ENCODE measurements at regions of chr7 and their contacts with region 1.

Region 1: GRCh38 chr7:101201695-101202604 is 1.1 kb upstream of the MOGAT3 start:
- DNase-seq: peak; percentile 48
- ATAC-seq: peak; percentile 77
- H3K4me3 ChIP-seq: peak overlapping the region; percentile 74 to 87 (median 84)
- H3K27ac ChIP-seq: peak overlapping the region; percentile 99
- H3K4me1 ChIP-seq: peaks cover 43% of the 10 kb centered on the region
- H3K27me3 ChIP-seq: no peaks in the 10 kb centered on the region; a peak in 1 of 5 replicates
- CTCF ChIP-seq: no peak; the same call in 1 of the 2 replicates
- EP300 ChIP-seq: 0 out of 4 replicates have a peak, but pooled peaks of 1 of the 2 experiments have one; percentile 7
- POLR2A ChIP-seq: peak; percentile 66 to 71; a peak in 3 of 4 replicates
- RAD21 ChIP-seq: 0 out of 2 replicates have a peak, but pooled peaks have one; percentile 31

Region 2: DNA sequence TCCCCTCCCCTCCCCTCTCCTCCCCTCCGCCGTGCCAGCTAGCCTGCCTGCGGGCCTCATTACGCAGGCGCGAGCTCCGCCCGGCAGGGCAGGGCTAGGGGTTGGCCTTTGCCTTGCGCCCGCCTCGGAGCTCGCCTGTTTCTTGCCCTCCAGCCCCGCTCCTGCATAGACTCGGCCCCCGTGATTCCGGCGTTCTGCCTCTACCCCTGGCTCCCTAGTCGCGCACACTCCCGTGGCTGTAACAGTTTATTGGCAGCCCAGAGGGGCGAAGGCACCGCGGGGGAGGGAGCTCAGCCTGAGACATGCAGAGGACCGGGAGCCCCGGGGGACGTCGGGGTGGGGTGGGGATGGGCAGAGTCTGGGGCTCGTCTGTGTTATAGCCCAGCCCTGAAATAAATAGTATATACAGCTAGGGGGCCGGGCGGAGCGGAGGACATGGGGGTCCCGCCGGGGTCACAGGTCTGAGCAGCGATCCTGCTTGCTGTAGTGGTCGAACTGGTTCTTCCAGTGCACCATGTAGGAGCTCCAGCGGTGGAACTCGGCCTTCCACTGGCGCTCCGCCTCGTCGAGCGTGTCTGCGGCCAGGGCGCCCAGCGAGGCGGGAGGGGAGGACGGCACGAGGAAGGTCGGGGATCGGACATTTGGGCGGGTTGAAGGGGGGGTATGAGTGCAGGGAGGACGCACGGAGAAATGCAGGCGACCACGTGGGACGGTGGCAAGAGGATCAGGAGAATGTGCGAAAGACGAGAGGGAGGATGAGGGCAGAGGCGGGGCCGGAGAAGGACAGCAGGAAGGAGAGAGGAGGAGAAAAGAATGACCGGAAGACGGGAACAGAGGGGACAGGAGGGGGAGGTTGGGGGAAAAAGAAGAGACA is 312.0 kb before region 1 on chr7:
- CTCF ChIA-PET with region 1: no interaction called
- POLR2A ChIA-PET with region 1: no interaction called
- in situ Hi-C with region 1: no loop called
- intact Hi-C with region 1: no loop called
- DNase-seq: peak; percentile 84
- ATAC-seq: peak; percentile 87
- H3K4me3 ChIP-seq: peak overlapping the region; percentile 63 to 75 (median 75)
- H3K27ac ChIP-seq: peak overlapping the region; percentile 52
- H3K4me1 ChIP-seq: peaks cover 61% of the 10 kb centered on the region
- H3K27me3 ChIP-seq: peaks cover 6 to 16% of the 10 kb centered on the region in 2 experiments; a peak in 4 of 5 replicates
- CTCF ChIP-seq: no peak
- EP300 ChIP-seq: no peak
- POLR2A ChIP-seq: no peak
- RAD21 ChIP-seq: no peak

Region 3: DNA sequence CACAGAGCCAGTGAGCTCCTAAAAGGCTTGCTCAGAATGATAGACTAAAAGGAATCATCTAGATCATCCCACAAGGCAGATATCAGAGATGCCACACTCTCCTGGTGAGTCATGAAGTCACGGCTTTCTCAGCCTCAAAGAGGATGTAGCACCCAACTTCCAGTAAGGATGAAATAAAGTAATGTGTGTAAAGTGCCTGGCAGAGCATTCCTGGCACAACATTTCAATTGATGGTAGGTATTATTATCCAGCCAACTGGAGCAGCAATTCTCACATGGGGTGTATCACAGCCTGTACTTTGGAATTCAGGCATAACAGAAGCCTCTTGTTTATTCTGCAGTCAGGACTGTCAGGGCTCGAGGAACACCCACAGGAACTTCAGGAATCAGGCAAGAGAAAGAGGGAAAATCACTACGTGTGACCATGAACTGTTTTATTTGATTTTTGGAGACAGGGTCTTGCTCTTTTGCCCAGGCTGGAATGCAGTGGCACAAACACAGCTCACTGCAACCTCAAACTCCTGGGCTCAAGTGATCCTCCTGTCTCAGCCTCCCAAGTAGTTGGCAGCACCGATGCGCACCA is 16.6 kb before region 1 on chr7:
- CTCF ChIA-PET with region 1: no interaction called
- POLR2A ChIA-PET with region 1: interaction called, 22 read pairs
- in situ Hi-C with region 1: no loop called
- intact Hi-C with region 1: no loop called
- DNase-seq: peak; percentile 57
- ATAC-seq: peak; percentile 47
- H3K4me3 ChIP-seq: no peak overlapping the region
- H3K27ac ChIP-seq: no peak overlapping the region
- H3K4me1 ChIP-seq: peaks cover 42% of the 10 kb centered on the region
- H3K27me3 ChIP-seq: peaks cover 3 to 9% of the 10 kb centered on the region in 2 experiments; a peak in 4 of 5 replicates
- CTCF ChIP-seq: no peak
- EP300 ChIP-seq: no peak
- POLR2A ChIP-seq: no peak
- RAD21 ChIP-seq: no peak

Region 4: DNA sequence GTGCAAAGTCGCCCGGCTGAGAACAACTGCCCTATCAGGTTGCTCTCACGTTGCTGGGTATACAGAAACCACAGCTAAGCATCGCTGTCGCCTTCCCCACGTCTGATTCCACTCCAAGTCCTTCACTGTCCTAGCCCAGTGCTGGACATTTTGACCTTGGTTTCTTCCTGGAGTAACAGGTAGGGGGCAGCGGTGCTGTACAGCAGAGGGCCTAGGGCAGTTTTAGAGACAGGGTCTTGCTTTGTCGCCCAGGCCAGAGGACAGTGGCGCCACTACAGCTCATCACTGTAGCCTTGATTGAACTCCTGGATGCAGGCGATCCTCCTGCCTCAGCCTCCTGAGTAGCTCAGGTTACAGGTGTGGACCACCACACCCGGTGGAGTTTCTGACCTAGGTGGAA is 33.1 kb after region 1 on chr7:
- CTCF ChIA-PET with region 1: no interaction called
- POLR2A ChIA-PET with region 1: interaction called, 15 read pairs
- in situ Hi-C with region 1: no loop called
- intact Hi-C with region 1: no loop called
- DNase-seq: peak; percentile 29
- ATAC-seq: peak; percentile 12
- H3K4me3 ChIP-seq: no peak overlapping the region
- H3K27ac ChIP-seq: no peak overlapping the region
- H3K4me1 ChIP-seq: peaks cover 65% of the 10 kb centered on the region
- H3K27me3 ChIP-seq: no peaks in the 10 kb centered on the region
- CTCF ChIP-seq: peak; percentile 62
- EP300 ChIP-seq: no peak
- POLR2A ChIP-seq: 0 out of 4 replicates have a peak, but pooled peaks of 1 of the 2 experiments have one; percentile 42
- RAD21 ChIP-seq: peak; percentile 62

Region 5: DNA sequence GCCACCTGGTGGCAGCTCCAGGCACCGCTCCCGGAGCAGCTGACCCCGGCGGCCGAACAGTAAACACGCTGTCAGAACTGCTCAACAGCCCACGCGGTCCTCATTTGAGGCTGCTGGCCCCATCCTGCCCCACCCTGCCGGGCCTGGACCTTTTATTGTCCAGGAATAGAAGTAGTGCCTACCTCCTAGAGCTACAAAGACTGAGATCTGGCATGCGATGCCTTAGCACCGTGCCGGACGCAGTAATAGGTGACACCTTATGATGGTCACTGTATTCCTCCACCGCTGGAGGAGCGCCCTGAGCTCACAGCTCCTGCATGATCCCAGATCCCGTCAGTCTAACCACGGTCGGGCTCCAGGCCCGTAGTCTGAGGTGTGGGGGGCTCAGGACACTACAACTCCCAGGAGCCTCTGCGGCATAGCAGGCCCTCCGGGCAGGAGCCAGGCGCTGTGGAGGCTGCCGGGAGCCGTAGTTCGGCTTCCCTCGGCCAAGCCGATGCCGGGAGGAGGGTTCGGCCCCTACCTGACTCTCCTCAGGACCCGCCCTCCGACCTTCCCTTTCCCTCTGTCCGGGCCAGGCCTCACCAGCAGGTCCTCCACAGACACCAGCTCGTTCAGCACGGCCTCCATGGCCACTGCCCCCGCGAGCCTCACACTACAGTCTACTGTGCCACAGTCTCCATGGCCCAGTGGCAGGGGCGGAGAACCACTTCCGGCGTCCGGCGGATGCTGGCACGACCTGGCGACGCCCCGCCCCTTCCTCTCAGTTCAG is 42.6 kb after region 1 on chr7 and contains the start of gene FIS1:
- CTCF ChIA-PET with region 1: no interaction called
- POLR2A ChIA-PET with region 1: interaction called, 21 read pairs
- in situ Hi-C with region 1: no loop called
- intact Hi-C with region 1: no loop called
- DNase-seq: peak; percentile 81
- ATAC-seq: peak; percentile 96
- H3K4me3 ChIP-seq: peak within 1 kb of the TSS; percentile 79 to 90 (median 82)
- H3K27ac ChIP-seq: peak within 1 kb of the TSS; percentile 76
- H3K4me1 ChIP-seq: peaks cover 32% of the 10 kb centered on the region
- H3K27me3 ChIP-seq: no peaks in the 10 kb centered on the region
- CTCF ChIP-seq: peak; percentile 96
- EP300 ChIP-seq: no peak
- POLR2A ChIP-seq: peak; percentile 55 to 81; a peak in 3 of 4 replicates
- RAD21 ChIP-seq: peak; percentile 93
- total RNA-seq, gene FIS1: 97.5 and 122 TPM in 2 replicates

Region 6: DNA sequence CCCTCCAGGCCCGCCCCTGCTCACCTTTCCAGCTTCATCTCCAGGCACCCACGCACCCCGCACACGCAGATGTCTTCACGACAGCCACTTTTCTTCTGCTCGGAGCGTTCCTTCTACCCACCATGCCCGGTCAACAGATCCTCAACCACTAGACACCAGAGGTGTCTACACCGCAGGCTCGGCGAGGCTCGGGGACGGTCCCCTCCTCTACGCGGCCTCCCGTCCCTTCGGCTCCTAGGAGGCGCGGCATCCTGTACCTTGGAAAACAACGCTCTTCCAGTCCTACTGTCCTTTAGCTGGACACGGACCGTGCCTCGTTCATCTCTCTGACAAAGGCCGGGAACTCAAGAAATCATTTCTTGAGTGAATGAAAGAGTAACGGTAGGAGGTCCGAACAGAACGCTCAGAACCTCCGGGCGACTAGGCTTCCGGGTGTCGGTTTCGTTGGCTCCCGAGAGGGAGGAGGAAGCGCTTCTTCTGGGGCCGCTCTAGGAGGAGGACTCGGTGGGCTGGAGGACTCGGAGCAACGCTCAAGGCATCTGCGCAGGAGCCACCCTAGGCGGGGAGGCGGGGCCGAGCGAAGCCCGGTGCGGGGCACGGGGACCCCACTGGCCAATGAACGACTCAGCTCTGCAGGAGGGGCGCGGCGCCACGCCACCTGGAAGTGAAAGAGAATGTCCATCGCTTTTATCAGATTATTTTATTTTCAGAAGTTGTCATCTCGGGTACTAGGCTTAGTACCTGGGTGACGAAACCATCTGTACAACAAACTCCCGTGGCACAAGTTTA is 50.1 kb after region 1 on chr7:
- CTCF ChIA-PET with region 1: no interaction called
- POLR2A ChIA-PET with region 1: interaction called, 24 read pairs
- in situ Hi-C with region 1: no loop called
- intact Hi-C with region 1: no loop called
- DNase-seq: peak; percentile 95
- ATAC-seq: peak; percentile 99
- H3K4me3 ChIP-seq: peak overlapping the region; percentile 86 to 99 (median 98)
- H3K27ac ChIP-seq: peak overlapping the region; percentile 76
- H3K4me1 ChIP-seq: peaks cover 14% of the 10 kb centered on the region
- H3K27me3 ChIP-seq: no peaks in the 10 kb centered on the region; a peak in 2 of 5 replicates
- CTCF ChIP-seq: no peak
- EP300 ChIP-seq: no peak
- POLR2A ChIP-seq: peak; percentile 73 to 82
- RAD21 ChIP-seq: no peak